ENCODE measurements at regions of chr12 and their contacts with region 1.

Region 1: GRCh38 chr12:51814311-51815088 is 34.0 kb downstream of the FIGNL2 start:
- DNase-seq: peak in 9 of 10 donors; percentile 57 to 95 (median 68)

Region 2: DNA sequence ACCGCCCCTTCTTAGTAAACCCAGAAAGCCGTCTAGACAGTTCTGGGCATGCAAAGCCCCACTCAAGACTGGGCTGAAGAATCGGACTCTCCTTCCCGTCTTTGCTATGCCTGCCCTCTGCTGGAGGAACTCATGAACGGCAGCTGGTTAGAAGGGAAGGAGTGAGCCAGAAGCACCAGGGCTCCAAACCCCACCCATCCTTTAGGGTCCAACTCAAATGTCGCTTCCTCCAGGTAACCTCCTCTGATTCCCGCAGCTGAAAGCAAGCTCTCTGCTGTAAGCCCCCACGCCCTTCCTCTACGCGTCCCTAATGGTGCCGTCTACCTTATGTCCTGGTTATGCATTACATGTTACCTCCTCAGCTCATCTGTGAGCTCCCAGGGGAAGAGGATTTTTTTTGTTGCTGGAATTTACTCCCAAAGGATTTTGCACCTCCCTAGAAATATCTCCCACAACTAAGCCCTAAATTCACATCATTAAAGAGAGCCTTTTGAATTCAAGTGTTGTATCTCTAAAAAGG is 282.5 kb before region 1 on chr12:
- intact Hi-C with region 1: loop called (anchors 5 kb)
- DNase-seq: peak; percentile 58 to 96 (median 82)

Region 3: DNA sequence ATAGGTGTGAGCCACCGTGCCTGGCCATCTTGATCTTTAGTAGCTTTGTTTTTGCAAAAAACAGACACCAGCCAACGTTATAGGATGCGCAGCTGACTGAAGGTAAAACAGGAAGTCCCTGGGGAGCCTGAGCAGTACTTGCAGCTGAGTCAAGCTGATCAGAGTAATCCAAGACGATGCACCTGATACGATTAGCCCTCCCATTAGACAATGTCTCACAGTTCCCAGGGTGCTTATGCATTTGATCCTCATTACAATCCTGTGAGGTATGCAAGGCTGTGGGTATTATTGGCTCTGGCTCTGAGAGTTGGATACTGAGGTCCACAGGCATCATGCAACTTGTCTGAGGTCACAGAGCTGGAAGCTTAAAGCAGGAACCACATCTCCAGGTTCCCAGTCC is 1142.5 kb after region 1 on chr12:
- intact Hi-C with region 1: no loop called
- DNase-seq: no peak